PC-9 (cell line): ENCODE measurements at regions of chr1 and their contacts with region 1.

Region 1: GRCh38 chr1:82269431-82269830 is 468.7 kb downstream of the ADGRL2 start:
- DNase-seq: peak in 1 of 2 experiments; percentile 10
- H3K4me3 ChIP-seq: no peak overlapping the region
- H3K27ac ChIP-seq: no peak overlapping the region
- H3K4me1 ChIP-seq: no peaks in the 10 kb centered on the region
- H3K27me3 ChIP-seq: no peaks in the 10 kb centered on the region
- CTCF ChIP-seq: no peak

Region 2: GRCh38 chr1:82152356-82153272 is 116.8 kb before region 1 on chr1:
- CTCF ChIA-PET with region 1: no interaction called
- POLR2A ChIA-PET with region 1: no interaction called
- intact Hi-C with region 1: no loop called
- DNase-seq: no peak
- H3K4me3 ChIP-seq: no peak overlapping the region
- H3K27ac ChIP-seq: no peak overlapping the region
- H3K4me1 ChIP-seq: no peaks in the 10 kb centered on the region
- H3K27me3 ChIP-seq: no peaks in the 10 kb centered on the region
- CTCF ChIP-seq: no peak

Region 3: GRCh38 chr1:82197606-82198005 is 71.8 kb before region 1 on chr1:
- CTCF ChIA-PET with region 1: no interaction called
- POLR2A ChIA-PET with region 1: interaction called, 10 read pairs
- intact Hi-C with region 1: no loop called
- DNase-seq: no peak
- H3K4me3 ChIP-seq: no peak overlapping the region
- H3K27ac ChIP-seq: no peak overlapping the region
- H3K4me1 ChIP-seq: no peaks in the 10 kb centered on the region
- H3K27me3 ChIP-seq: no peaks in the 10 kb centered on the region
- CTCF ChIP-seq: no peak